ENCODE measurements at regions of chr11 and their contacts with region 1.

Region 1: DNA sequence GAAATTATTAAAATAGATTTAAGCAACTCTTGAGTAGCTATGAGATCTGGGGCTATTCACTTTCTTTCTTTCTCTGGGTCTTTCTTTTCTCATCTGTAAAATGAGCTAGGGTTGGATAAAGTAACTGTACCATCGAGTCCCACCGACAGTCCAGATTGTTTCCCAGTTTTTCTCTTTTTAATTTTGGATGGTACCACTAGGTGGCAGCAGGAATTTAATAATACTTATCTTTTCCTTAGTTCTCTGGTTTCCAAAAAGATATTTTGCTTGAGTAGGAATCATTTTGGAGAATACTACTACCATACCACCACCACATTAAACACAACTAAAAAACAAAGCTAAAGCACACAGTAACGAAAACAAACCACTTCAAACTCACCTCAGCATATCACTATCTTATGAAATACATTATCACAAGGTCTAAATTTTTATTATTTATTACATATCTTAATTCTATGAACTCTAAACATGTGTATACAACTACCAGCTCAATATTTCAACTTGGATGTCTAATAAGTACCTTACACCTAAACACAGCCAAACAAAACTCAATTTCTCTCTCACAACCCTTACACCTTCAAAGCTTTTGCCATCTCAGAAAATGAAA is 584.0 kb downstream of the KCNA4 start:
- DNase-seq: no peak
- H3K4me3 Mint-ChIP-seq: no peak overlapping the region
- H3K27ac Mint-ChIP-seq: no peak overlapping the region
- H3K4me1 Mint-ChIP-seq: no peaks in the 10 kb centered on the region
- H3K27me3 Mint-ChIP-seq: no peaks in the 10 kb centered on the region

Region 2: DNA sequence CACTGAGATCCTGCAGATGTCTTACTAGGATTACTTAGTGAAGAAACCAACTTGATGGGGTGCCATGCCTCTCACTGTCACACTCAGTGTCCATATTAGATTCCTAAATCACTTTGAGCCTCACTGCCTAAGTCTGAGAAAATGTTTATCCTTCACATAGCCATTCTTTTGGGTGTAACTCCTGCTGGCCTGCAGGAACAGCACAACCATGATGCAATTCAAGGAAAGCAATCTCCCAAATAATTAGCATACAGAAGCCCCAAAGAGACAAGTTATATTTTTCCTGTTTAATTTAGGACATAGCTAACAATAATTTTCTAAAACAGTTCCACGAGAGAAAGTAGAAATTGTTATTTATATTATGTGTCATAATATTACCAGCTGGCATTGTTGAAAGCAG is 71.5 kb before region 1 on chr11:
- intact Hi-C with region 1: no loop called
- DNase-seq: no peak
- H3K4me3 Mint-ChIP-seq: no peak overlapping the region
- H3K27ac Mint-ChIP-seq: no peak overlapping the region
- H3K4me1 Mint-ChIP-seq: no peaks in the 10 kb centered on the region
- H3K27me3 Mint-ChIP-seq: no peaks in the 10 kb centered on the region

Region 3: DNA sequence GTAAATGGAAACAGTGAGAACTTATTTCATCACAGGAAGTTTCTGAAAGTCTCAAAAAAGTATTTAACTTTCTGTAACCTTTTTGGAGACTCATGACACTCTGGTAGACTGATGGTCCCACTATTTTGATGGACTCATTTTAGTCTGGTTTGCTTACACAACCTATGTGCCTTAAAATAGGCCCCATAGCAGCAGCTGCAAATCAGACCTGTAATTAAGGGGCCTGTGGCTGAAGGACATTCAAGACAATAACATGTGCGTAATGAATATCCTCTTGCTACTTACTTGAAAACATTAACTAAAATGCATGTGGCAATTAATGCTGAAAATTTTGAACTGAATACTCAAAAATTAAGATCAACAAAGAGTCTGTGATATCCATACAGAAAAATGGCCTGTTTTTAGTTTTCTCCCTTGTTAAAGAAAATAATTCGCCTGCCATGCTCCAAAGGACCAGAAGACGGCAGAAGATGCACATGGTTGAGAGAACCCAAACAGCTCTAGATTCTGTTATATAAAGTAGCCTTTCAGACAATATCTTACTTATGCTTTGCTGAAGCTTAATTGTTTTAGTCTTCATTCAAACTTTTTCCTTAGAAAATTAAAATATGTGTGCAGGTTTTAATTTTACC is 15.5 kb after region 1 on chr11:
- intact Hi-C with region 1: no loop called
- DNase-seq: no peak
- H3K4me3 Mint-ChIP-seq: no peak overlapping the region
- H3K27ac Mint-ChIP-seq: no peak overlapping the region
- H3K4me1 Mint-ChIP-seq: no peaks in the 10 kb centered on the region
- H3K27me3 Mint-ChIP-seq: no peaks in the 10 kb centered on the region

Region 4: DNA sequence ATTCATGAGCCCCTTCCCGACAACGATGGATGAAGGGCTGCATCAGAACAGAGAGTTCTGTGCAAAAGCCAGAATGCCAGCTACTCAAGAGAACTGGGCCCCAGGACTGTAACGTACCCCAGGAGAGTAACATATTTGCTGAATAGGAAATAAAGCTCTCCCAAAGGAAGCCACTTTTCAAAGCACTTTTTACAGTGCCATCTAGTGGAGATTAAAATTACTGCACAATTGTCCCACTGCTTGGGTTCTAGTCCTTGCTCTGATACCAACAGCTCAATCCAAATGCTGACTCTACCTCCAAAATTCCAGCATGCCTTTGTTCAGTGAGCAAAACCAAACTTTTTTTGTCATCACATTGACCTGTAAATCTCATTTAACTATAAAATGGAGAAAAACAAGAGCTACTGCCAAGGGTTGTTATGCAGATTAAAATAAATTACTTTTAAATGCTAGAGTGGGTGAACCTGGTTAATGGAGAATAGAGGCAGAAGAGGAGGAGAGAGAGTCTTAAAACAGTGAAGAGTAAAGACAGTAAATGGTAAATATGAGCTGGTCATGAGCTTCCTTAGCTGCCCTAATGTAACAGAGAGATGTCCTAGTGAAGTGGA is 710.4 kb after region 1 on chr11:
- intact Hi-C with region 1: loop called (anchors 5 kb)
- DNase-seq: peak; percentile 69
- H3K4me3 Mint-ChIP-seq: no peak overlapping the region
- H3K27ac Mint-ChIP-seq: no peak overlapping the region
- H3K4me1 Mint-ChIP-seq: no peaks in the 10 kb centered on the region
- H3K27me3 Mint-ChIP-seq: no peaks in the 10 kb centered on the region

Measured in activated CD4-positive, alpha-beta T cell treated with anti-CD3 and anti-CD28 coated beads, Interleukin-2, amount 10 ng/mL, durations not matched to agents 24 days and 14 days (primary cell).